Activated naive CD4-positive, alpha-beta T cell treated with anti-CD3 and anti-CD28 coated beads for 36 hours (primary cell): ENCODE measurements at regions of chr19 and their contacts with region 1.

Region 1: GRCh38 chr19:23052414-23052813 is 49.4 kb upstream of the ZNF728 start:
- DNase-seq: no peak
- H3K4me3 Mint-ChIP-seq: no peak overlapping the region
- H3K27ac Mint-ChIP-seq: no peak overlapping the region
- H3K4me1 Mint-ChIP-seq: no peaks in the 10 kb centered on the region
- H3K27me3 Mint-ChIP-seq: no peaks in the 10 kb centered on the region

Region 2: DNA sequence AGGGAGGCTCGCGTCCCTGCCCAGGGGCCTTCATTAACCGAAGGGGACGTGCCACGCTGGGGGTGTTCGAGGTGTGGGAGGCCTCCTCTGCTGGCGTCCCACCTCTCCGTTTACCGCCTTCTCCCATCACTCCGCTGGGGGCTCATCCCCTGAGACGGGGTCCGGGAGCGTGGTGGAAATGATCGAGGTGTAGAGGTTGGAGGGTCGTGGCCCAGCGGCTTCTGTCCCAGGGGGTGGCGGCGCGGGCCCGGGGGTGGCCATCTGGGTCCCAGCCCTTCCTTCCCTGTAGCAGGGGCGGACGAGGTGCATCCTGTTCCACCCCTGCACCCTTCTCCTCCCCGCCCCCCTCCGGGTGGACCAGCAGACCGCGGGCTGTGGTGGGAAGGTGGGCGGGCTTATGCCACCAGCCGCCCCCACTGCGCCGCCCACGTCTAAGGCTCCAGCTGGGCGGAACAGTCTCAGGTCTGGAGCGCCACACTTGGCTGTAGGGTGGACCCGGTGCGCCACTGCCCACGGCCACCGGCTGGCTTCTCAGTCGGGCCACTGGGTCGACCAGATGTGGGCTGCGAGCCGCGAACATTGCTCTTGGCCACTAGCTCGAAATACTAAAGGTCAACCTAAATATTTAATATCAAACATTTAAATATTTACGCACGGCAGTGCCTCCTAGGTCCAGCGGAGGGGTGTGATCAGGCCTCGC is 150.8 kb before region 1 on chr19:
- CTCF ChIA-PET with region 1: no interaction called
- intact Hi-C with region 1: no loop called
- DNase-seq: no peak
- H3K4me3 Mint-ChIP-seq: no peak overlapping the region
- H3K27ac Mint-ChIP-seq: no peak overlapping the region
- H3K4me1 Mint-ChIP-seq: no peaks in the 10 kb centered on the region
- H3K27me3 Mint-ChIP-seq: no peaks in the 10 kb centered on the region

Region 3: GRCh38 chr19:23002690-23003422 is 49.6 kb before region 1 on chr19 and contains the start of gene ZNF728:
- CTCF ChIA-PET with region 1: no interaction called
- intact Hi-C with region 1: loop called (anchors 2 kb)
- DNase-seq: no peak
- H3K4me3 Mint-ChIP-seq: no peak within 1 kb of the TSS
- H3K27ac Mint-ChIP-seq: no peak within 1 kb of the TSS
- H3K4me1 Mint-ChIP-seq: no peaks in the 10 kb centered on the region
- H3K27me3 Mint-ChIP-seq: no peaks in the 10 kb centered on the region
- total RNA-seq, gene ZNF728: not detected